ENCODE measurements at regions of chr4 and their contacts with region 1.

Region 1: DNA sequence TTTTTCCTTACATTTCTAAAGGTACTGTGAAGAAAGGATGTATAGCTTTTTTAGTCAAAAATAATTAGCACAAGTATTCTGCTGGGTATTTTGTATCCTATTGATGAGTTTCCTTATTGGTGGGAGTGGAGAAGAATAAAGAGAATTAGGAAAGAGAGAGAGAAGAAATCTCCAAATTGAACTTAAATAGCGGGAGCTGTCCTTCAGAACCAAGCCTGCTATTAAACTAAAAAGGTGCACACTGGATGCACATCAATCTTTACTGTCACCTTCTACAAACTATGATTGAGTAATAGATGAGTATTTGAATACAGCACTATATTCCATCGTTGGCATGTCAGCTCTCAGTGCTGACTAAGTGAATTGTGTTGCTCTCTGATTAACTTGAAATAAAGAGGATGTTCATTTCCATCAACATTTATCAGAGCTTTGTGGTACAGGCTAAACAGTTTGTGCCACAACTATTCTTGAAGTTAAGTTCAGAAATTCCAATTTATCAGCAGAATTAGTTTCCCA is 143.6 kb upstream of the PABPC4L start:
- DNase-seq: no peak
- H3K4me3 ChIP-seq: no peak overlapping the region
- H3K4me3 Mint-ChIP-seq: no peak overlapping the region
- H3K27ac ChIP-seq: no peak overlapping the region
- H3K27ac Mint-ChIP-seq: peak overlapping the region in 1 of 7 donors; percentile 1
- H3K4me1 ChIP-seq: no peaks in the 10 kb centered on the region
- H3K4me1 Mint-ChIP-seq: no peaks in the 10 kb centered on the region
- H3K27me3 ChIP-seq: no peaks in the 10 kb centered on the region
- H3K27me3 Mint-ChIP-seq: no peaks in the 10 kb centered on the region

Region 2: DNA sequence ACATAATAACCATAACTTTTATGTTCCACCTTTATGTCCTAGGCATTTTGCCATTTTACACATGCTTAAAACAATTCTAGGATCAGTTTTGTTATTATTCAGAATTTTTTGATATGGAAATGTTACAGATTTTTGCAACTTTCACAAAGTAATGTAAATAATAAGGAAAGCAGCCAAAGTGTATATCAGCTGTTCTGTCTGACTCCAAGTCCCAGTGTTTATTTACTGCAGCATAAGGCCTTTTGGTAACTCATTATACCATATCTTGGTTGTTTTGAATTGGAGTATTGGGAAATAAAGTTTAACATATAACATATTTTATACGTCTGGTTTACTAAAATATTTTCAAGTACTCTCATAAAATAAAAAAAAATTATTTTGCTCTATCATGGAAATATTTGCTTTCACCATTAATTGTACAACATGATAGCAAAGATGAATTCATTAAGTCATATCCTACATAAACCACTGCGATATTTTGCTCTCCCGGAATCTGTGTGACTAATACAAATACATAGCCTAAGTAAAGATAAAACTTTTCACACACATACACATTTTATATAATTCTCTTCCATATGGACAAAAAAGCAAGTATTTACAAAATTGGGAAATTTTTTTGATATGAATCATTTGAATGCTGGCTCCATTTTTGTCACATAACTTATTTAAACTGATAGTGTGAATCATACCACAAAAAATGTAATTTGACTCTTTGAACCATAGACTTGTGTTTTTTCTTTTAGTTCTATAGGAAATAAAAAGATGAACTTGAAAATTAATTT is 542.6 kb before region 1 on chr4:
- CTCF ChIA-PET with region 1: no interaction called
- POLR2A ChIA-PET with region 1: no interaction called
- intact Hi-C with region 1: loop called (anchors 10 kb)
- DNase-seq: no peak
- H3K4me3 ChIP-seq: no peak overlapping the region
- H3K4me3 Mint-ChIP-seq: no peak overlapping the region
- H3K27ac ChIP-seq: no peak overlapping the region
- H3K27ac Mint-ChIP-seq: no peak overlapping the region
- H3K4me1 ChIP-seq: no peaks in the 10 kb centered on the region
- H3K4me1 Mint-ChIP-seq: no peaks in the 10 kb centered on the region
- H3K27me3 ChIP-seq: no peaks in the 10 kb centered on the region
- H3K27me3 Mint-ChIP-seq: no peaks in the 10 kb centered on the region

Measured in CD4-positive, alpha-beta memory T cell (primary cell).